GM12878 (cell line): ENCODE measurements at regions of chr14 and their contacts with region 1.

Region 1: DNA sequence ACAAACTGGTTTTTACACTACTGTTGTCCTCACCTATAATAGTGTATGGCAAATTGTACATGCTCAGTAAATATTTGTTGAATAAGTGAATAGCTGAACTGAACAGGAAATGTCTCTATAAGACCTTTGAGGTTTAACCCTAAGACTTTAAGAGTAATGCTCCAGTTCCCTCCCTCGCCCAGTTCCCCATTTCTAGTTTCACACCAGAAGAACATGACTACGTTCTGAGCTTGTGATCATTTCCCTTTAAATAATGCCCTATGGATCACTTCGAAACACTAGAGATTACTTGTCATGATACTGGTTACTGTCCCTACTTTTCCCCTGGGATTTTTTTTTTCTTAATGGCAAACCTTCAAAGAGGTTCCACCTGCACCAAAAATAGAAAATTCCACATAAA is 69.3 kb downstream of the PRKD1 start:
- DNase-seq: peak; percentile 45
- ATAC-seq: peak; percentile 95
- H3K4me3 ChIP-seq: no peak overlapping the region
- H3K27ac ChIP-seq: peak overlapping the region; percentile 78
- H3K4me1 ChIP-seq: peaks cover 8% of the 10 kb centered on the region
- H3K27me3 ChIP-seq: no peaks in the 10 kb centered on the region
- CTCF ChIP-seq: no peak
- EP300 ChIP-seq: peak in 1 of 2 experiments; percentile 57; a peak in 1 of 4 replicates
- POLR2A ChIP-seq: no peak
- RAD21 ChIP-seq: no peak

Region 2: GRCh38 chr14:29805415-29806123 is 52.7 kb before region 1 on chr14:
- CTCF ChIA-PET with region 1: no interaction called
- POLR2A ChIA-PET with region 1: no interaction called
- RAD21 ChIA-PET with region 1: no interaction called
- SMC1A ChIA-PET with region 1: no interaction called
- in situ Hi-C with region 1: no loop called
- intact Hi-C with region 1: no loop called
- DNase-seq: no peak
- ATAC-seq: no peak
- H3K4me3 ChIP-seq: no peak overlapping the region
- H3K27ac ChIP-seq: no peak overlapping the region
- H3K4me1 ChIP-seq: no peaks in the 10 kb centered on the region
- H3K27me3 ChIP-seq: no peaks in the 10 kb centered on the region
- CTCF ChIP-seq: no peak
- EP300 ChIP-seq: no peak
- POLR2A ChIP-seq: no peak
- RAD21 ChIP-seq: no peak

Region 3: GRCh38 chr14:29846339-29847055 is 11.8 kb before region 1 on chr14:
- CTCF ChIA-PET with region 1: no interaction called
- POLR2A ChIA-PET with region 1: no interaction called
- RAD21 ChIA-PET with region 1: interaction called, 17 read pairs
- SMC1A ChIA-PET with region 1: interaction called, 27 read pairs
- in situ Hi-C with region 1: no loop called
- intact Hi-C with region 1: no loop called
- DNase-seq: peak; percentile 9
- ATAC-seq: peak; percentile 74
- H3K4me3 ChIP-seq: no peak overlapping the region
- H3K27ac ChIP-seq: no peak overlapping the region; the same call in 1 of the 2 replicates
- H3K4me1 ChIP-seq: no peaks in the 10 kb centered on the region; the same call in 1 of the 2 replicates
- H3K27me3 ChIP-seq: no peaks in the 10 kb centered on the region
- CTCF ChIP-seq: no peak
- EP300 ChIP-seq: no peak
- POLR2A ChIP-seq: no peak
- RAD21 ChIP-seq: no peak

Region 4: GRCh38 chr14:30330445-30330844 is 472.1 kb after region 1 on chr14:
- CTCF ChIA-PET with region 1: no interaction called
- POLR2A ChIA-PET with region 1: no interaction called
- RAD21 ChIA-PET with region 1: no interaction called
- SMC1A ChIA-PET with region 1: no interaction called
- in situ Hi-C with region 1: no loop called
- intact Hi-C with region 1: loop called (anchors 10 kb)
- DNase-seq: no peak
- ATAC-seq: no peak
- H3K4me3 ChIP-seq: no peak overlapping the region
- H3K27ac ChIP-seq: no peak overlapping the region
- H3K4me1 ChIP-seq: no peaks in the 10 kb centered on the region
- H3K27me3 ChIP-seq: no peaks in the 10 kb centered on the region
- CTCF ChIP-seq: peak; percentile 3 to 33 (median 24); a peak in 3 of 6 replicates
- EP300 ChIP-seq: no peak
- POLR2A ChIP-seq: no peak
- RAD21 ChIP-seq: no peak